Activated naive CD4-positive, alpha-beta T cell treated with anti-CD3 and anti-CD28 coated beads for 36 hours (primary cell): ENCODE measurements at regions of chr6 and their contacts with region 1.

Region 1: DNA sequence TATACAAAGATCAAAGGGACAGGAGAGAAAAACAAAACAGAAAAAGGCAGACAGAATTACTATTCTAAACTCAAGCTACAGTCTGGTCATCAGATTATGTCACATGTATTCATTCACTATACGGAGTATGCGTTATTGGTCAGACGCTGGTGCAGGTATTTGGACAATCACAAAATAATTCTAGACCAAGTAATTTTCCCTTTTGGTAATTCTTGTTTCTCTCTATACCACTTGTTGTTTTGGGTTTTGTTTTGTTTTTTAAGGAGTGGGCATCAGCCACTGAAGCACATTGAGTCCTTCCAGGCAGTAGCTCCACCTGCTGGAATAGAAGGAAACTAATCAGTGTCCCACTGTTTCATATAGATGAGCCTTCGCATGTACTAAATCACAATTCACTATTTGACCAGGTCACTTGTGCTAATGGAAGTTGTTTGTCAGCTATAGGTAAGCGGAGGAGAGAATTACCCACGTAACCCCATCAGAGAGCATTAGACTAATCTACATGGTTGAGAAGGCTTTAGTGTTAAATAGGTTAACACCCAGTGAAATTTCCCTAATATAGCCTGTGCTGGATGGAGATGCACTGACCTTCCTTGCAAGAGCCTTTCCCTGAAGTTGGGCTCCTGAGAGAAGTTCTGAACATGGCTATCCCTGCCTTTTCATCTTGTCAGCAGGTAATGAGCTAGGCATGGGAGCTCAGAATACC is 77.9 kb downstream of the TNFAIP3 start:
- DNase-seq: peak; percentile 46
- H3K4me3 Mint-ChIP-seq: no peak overlapping the region
- H3K27ac Mint-ChIP-seq: peak overlapping the region; percentile 0
- H3K4me1 Mint-ChIP-seq: peaks cover 56% of the 10 kb centered on the region
- H3K27me3 Mint-ChIP-seq: no peaks in the 10 kb centered on the region

Region 2: GRCh38 chr6:137680705-137681346 is 264.1 kb before region 1 on chr6:
- CTCF ChIA-PET with region 1: no interaction called
- intact Hi-C with region 1: loop called (anchors 1 kb)
- DNase-seq: no peak
- H3K4me3 Mint-ChIP-seq: no peak overlapping the region
- H3K27ac Mint-ChIP-seq: peak overlapping the region; percentile 84
- H3K4me1 Mint-ChIP-seq: peaks cover 54% of the 10 kb centered on the region
- H3K27me3 Mint-ChIP-seq: peaks cover 8% of the 10 kb centered on the region

Region 3: GRCh38 chr6:137866914-137867684 is 77.8 kb before region 1 on chr6 and contains the start of gene TNFAIP3:
- CTCF ChIA-PET with region 1: interaction called, 161 read pairs
- intact Hi-C with region 1: loop called (anchors 1 kb)
- DNase-seq: peak; percentile 97
- H3K4me3 Mint-ChIP-seq: peak within 1 kb of the TSS; percentile 89
- H3K27ac Mint-ChIP-seq: peak within 1 kb of the TSS; percentile 99
- H3K4me1 Mint-ChIP-seq: peaks cover 32% of the 10 kb centered on the region
- H3K27me3 Mint-ChIP-seq: no peaks in the 10 kb centered on the region
- total RNA-seq, gene TNFAIP3: 289 to 294 TPM

Region 4: GRCh38 chr6:137903933-137904821 is 40.8 kb before region 1 on chr6:
- CTCF ChIA-PET with region 1: interaction called, 9 read pairs
- intact Hi-C with region 1: loop called (anchors 1 kb)
- DNase-seq: peak; percentile 77
- H3K4me3 Mint-ChIP-seq: peak overlapping the region; percentile 71
- H3K27ac Mint-ChIP-seq: peak overlapping the region; percentile 100
- H3K4me1 Mint-ChIP-seq: peaks cover 71% of the 10 kb centered on the region
- H3K27me3 Mint-ChIP-seq: no peaks in the 10 kb centered on the region

Region 5: GRCh38 chr6:137933696-137934095 is 11.2 kb before region 1 on chr6:
- CTCF ChIA-PET with region 1: interaction called, 13 read pairs
- intact Hi-C with region 1: no loop called
- DNase-seq: no peak
- H3K4me3 Mint-ChIP-seq: no peak overlapping the region
- H3K27ac Mint-ChIP-seq: no peak overlapping the region
- H3K4me1 Mint-ChIP-seq: peaks cover 42% of the 10 kb centered on the region
- H3K27me3 Mint-ChIP-seq: no peaks in the 10 kb centered on the region

Region 6: DNA sequence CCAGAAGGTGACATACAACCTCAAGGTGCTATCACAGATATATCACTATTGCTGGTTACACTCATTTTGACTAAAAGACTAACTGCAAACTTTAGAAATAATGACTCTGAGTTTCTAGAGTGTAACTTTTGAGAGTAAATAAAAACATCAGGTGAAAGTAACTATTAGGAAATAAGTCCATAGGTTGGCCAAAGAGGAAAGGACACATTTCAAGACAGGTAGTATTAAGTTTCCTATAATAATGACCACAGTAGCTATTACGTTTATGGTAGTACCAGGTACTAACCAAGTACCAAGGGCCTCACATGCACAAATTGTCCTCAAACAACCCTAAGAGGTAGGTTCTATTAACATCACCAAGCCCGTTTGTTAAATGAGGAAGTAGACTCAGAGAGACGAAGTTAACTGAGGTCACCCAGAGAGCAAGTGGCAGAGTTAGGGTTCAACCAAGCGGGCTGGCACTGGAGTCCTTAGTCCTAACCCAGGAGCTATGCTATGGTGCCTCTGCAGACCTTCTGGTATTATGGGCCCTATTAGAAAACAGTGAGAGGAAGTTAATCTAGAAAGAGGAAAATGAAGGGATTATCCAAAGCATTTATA is 495.9 kb after region 1 on chr6:
- CTCF ChIA-PET with region 1: no interaction called
- intact Hi-C with region 1: no loop called
- DNase-seq: no peak
- H3K4me3 Mint-ChIP-seq: no peak overlapping the region
- H3K27ac Mint-ChIP-seq: no peak overlapping the region
- H3K4me1 Mint-ChIP-seq: no peaks in the 10 kb centered on the region
- H3K27me3 Mint-ChIP-seq: no peaks in the 10 kb centered on the region